Left colon (tissue), 2 donors: ENCODE measurements at regions of chr6 and their contacts with region 1.

Region 1: DNA sequence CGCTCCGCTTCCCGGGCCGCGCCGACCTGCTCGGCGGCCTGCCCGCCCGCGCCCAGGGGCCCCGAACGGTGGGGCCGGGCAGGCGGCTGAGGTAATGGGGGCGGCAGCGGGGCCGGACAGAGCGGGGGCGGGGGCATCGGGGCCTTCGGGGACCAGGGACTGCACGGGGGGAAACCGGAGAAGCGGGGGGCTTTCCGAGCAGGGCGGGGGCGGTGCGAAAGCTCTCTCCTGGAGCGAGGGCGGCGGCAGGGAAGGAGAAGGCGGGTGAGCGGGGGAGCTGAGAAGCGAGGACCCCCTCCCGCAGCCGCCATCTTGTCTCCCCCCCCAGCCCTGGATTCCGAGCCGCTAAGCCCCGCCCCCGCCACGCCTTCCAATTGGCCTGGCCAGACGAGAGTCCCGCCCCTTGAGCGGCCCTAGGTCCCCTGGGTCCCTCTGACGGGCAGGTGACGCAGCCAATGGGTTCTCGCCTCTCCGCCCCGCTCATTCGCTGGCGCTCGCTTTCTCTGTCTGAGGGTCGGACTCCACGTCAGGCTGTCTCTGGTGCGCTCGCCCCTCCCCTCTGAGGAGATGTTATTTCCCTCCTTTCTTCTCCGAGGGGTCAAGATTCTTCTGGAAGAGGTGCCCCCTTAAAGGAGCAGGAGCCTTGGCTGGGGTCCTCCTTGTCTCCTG is 470 bp downstream of the BRPF3 start:
- DNase-seq: peak; percentile 99 to 100
- ATAC-seq: peak; percentile 90

Region 2: GRCh38 chr6:35797837-35798526 is 399.0 kb before region 1 on chr6:
- intact Hi-C with region 1: no loop called
- DNase-seq: no peak
- ATAC-seq: no peak

Region 3: GRCh38 chr6:36027501-36028087 is 169.4 kb before region 1 on chr6 and contains the start of gene MAPK14:
- intact Hi-C with region 1: loop called in 1 of 2 experiments (anchors 10 kb)
- DNase-seq: peak; percentile 99 to 100
- ATAC-seq: peak; percentile 86
- total RNA-seq, gene MAPK14: 60.0 to 69.8 TPM

Region 4: DNA sequence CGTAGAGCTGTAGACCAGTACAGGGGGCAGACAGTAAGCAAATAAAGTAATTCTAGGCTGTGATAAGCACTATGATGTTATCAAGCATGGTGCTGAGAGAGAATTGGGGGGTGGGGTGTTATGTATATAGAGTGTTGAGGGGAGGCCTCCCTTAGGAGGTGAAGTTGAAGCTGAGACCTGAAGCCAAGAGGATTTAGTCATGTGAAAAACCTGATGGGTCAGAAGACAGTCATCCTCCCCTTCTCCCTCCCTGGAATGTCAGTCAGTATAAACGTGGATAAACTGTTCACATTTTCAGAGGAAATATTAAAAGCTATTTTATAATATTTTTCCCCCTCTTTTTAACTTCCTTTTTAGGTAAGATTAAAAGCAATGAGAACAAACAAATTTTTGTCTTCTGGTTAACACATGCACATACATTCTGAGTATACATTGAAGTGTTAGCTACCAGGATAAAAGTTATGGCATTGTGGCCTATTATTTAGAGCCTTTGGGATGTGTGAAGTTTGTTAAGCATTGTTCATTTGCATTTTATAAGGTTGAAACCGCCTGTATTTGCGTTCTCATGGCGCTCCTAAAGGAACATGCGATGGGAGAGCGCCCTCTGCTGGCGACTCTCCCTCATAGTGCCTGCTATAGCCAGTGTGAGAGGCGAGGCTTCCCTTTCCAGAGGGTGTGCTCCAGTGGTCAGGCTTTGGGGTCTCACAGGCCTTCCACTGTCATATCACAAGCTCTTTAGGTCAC is 102.1 kb before region 1 on chr6:
- intact Hi-C with region 1: no loop called
- DNase-seq: peak; percentile 81 to 92
- ATAC-seq: peak; percentile 81

Region 5: GRCh38 chr6:36129941-36130666 is 66.9 kb before region 1 on chr6 and contains the start of gene MAPK13:
- intact Hi-C with region 1: loop called in 1 of 2 experiments (anchors 5 kb)
- DNase-seq: peak; percentile 52 to 74
- ATAC-seq: peak; percentile 71
- total RNA-seq, gene MAPK13: 184 to 186 TPM